ENCODE measurements at regions of chrX and their contacts with region 1.

Region 1: DNA sequence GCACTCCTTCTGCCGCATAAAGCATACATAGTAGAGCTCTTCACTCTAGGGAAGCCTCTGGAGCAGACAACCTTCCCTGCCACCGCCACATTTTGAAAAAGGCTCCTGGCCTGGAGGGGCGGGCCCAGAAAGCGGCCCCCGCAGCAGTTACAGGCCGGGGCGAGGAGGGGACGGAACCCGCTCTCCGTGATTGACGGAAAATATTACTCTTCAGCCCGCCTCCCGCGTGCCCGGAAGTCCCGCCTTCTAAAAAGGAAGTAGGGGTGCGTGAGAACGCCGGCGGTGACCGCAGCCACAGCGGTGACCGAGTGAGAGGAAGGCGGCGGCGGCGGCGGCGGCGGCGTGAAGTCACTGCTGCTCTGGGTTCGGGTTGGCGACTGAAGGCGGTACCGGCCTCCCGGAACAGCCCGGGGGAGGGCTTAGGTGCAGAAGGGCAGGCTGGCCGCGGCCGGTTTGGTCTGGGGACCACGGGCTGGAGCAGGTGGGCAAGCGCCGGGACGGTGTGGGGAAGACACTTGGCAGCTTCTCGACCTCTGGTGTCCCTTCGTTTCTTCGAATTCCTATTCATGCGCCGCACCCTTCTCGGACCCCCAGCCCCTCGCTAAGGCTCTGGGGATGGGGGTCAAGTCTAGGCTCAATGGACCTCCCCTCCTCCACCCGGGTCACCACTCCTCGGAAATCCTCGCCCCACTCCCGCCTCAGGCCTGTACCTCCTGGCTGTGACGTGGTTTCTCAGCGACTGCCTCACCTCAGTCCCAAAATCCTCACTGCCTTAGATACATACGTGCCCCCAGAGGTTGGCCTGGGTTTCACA is at the start of gene HCCS:
- DNase-seq: peak; percentile 75 to 84
- H3K4me3 ChIP-seq: peak within 1 kb of the TSS; percentile 94
- H3K27ac ChIP-seq: peak within 1 kb of the TSS; percentile 75
- H3K4me1 ChIP-seq: peaks cover 10% of the 10 kb centered on the region; the same call in 1 of the 2 replicates
- H3K27me3 ChIP-seq: no peaks in the 10 kb centered on the region
- CTCF ChIP-seq: 0 out of 2 replicates have a peak, but pooled peaks have one; percentile 25
- total RNA-seq, gene HCCS: 30.4 and 38.5 TPM in 2 replicates

Region 2: DNA sequence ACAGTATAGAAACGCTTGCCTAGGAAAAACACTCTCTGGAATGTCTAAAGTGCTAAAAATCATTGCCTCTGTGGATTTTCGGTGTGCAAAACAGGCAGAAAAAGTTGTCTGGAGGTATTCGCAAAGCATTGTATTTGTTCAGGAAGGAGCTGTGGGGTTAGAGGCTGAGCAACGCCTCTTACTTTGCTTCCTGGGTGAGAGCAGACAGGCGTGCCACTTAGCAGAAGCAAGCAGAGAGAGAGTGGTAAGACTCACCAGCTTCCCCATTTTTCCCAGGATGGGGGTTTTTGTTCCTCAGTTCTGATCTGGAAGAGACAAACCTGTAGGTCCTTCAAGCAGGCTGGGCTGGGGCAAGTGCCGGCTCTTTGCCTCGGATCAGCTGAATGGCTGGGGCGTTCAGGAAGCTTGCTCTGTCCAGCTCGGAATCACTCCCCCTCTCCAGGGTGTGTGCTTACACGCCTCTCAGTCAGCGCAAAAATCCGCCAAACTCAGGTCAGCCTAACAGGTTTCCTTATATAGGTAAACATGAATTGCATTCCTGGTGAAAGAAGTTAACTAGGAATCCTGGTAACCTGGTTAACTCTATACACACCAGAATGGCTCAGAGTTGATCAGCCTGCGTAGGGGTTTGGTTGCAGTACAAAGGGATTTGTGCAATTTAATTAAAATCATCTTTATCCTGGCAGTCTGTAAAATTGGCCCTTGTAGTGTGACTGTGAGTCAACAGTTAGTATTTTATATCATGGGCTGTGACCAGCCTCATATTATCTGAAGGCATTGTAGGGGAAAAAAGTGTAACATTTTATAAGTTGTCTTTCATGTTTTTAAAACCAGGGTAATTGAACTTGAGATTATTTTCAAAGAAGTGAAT is 277.7 kb before region 1 on chrX:
- CTCF ChIA-PET with region 1: no interaction called
- POLR2A ChIA-PET with region 1: no interaction called
- intact Hi-C with region 1: loop called (anchors 5 kb)
- DNase-seq: peak; percentile 64 to 86
- H3K4me3 ChIP-seq: peak overlapping the region; percentile 73
- H3K27ac ChIP-seq: peak overlapping the region; percentile 73
- H3K4me1 ChIP-seq: peaks cover 22% of the 10 kb centered on the region
- H3K27me3 ChIP-seq: no peaks in the 10 kb centered on the region
- CTCF ChIP-seq: no peak